Heart left ventricle (tissue), 16 donors: ENCODE measurements at regions of chr7 and their contacts with region 1.

Region 1: GRCh38 chr7:3404455-3404854 is 103.4 kb downstream of the SDK1 start:
- DNase-seq: no peak
- ATAC-seq: no peak
- H3K4me3 ChIP-seq: no peak overlapping the region
- H3K27ac ChIP-seq: no peak overlapping the region
- H3K4me1 ChIP-seq: peaks cover 0 to 4% (median 0%) of the 10 kb centered on the region in 12 donors
- H3K27me3 ChIP-seq: peaks cover 0 to 6% (median 0%) of the 10 kb centered on the region in 9 donors
- CTCF ChIP-seq: no peak
- POLR2A ChIP-seq: no peak

Region 2: DNA sequence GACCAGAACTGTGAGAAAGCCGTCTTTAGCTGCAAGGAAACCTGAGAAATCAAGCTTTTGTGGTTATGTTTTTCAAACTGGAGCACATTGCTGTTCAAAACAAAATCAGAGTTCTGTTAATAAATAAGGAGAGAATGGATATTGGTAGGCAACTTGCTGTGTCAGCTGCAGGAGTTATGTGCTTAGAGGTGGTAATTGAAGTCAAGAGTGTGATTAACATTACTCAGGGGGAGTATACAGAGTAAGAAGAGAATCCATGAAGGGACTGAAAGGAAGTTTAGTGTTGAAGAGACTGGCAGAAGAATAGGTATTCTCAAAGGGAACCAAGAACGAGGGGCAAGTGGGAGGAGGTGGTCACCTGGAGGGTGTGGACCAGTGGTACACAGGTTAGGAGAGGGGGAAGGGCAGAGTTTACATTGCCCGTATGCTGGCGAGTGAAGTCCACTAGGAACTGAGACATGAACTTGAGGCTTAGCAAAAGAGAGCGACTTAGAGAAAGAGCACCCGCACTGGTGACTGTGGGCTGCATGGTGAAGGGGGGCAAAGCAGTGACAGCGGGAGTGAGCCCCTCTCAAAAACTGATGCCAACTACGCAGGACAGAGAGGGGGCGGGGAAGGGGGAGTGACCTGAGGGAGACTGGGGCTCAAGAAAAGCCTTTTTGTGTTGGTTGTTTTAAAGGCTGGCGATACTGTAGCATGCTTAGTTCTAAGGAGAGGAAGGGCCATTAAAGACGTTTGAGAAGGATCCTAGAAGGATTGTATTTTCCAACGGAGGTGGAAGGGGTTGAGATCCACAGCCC is 23.4 kb before region 1 on chr7:
- intact Hi-C with region 1: no loop called
- DNase-seq: no peak
- ATAC-seq: no peak
- H3K4me3 ChIP-seq: no peak overlapping the region
- H3K27ac ChIP-seq: no peak overlapping the region
- H3K4me1 ChIP-seq: no peaks in the 10 kb centered on the region
- H3K27me3 ChIP-seq: peaks cover 0 to 6% (median 0%) of the 10 kb centered on the region in 9 donors
- CTCF ChIP-seq: no peak
- POLR2A ChIP-seq: no peak

Region 3: DNA sequence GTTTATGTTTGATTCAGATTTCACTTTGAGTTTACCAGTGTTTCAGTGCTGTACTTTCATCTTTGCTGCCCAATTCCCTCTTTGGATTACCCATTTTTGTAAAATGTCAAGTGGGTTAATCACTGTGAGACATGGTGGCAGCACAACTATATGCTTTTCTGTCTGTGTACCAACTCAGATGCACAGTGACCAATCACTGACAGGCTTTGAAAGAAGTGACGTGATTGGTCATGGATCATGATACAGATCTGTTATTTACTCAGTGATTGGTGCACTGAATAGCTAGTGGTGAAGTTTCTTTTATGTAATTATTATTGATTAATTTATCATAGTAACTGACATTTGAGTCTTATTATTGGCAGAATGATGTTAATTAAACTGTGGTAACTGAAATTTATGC is 23.5 kb after region 1 on chr7:
- intact Hi-C with region 1: loop called in 1 of 10 experiments (anchors 2 kb)
- DNase-seq: no peak
- ATAC-seq: no peak
- H3K4me3 ChIP-seq: no peak overlapping the region
- H3K27ac ChIP-seq: no peak overlapping the region
- H3K4me1 ChIP-seq: no peaks in the 10 kb centered on the region
- H3K27me3 ChIP-seq: no peaks in the 10 kb centered on the region
- CTCF ChIP-seq: no peak
- POLR2A ChIP-seq: no peak

Region 4: GRCh38 chr7:3537210-3537875 is 132.9 kb after region 1 on chr7:
- intact Hi-C with region 1: no loop called
- DNase-seq: peak in 1 of 5 donors; percentile 28
- ATAC-seq: peak in 1 of 4 donors; percentile 83
- H3K4me3 ChIP-seq: no peak overlapping the region
- H3K27ac ChIP-seq: no peak overlapping the region
- H3K4me1 ChIP-seq: no peaks in the 10 kb centered on the region
- H3K27me3 ChIP-seq: no peaks in the 10 kb centered on the region
- CTCF ChIP-seq: no peak
- POLR2A ChIP-seq: no peak